K562 (cell line): ENCODE measurements at regions of chr1 and their contacts with region 1.

Region 1: GRCh38 chr1:207017615-207018559 is 14.7 kb downstream of the C1orf116 start:
- DNase-seq: peak; percentile 78 to 89 (median 84)
- ATAC-seq: peak; percentile 31
- H3K4me3 ChIP-seq: no peak overlapping the region
- H3K27ac ChIP-seq: peak overlapping the region; percentile 9; the same call in 1 of the 3 replicates
- H3K4me1 ChIP-seq: peaks cover 58 to 80% of the 10 kb centered on the region in 2 experiments
- H3K27me3 ChIP-seq: no peaks in the 10 kb centered on the region
- CTCF ChIP-seq: no peak
- EP300 ChIP-seq: peak; percentile 96
- POLR2A ChIP-seq: no peak
- RAD21 ChIP-seq: 0 out of 4 replicates have a peak, but pooled peaks of 1 of the 2 experiments have one; percentile 13

Region 2: DNA sequence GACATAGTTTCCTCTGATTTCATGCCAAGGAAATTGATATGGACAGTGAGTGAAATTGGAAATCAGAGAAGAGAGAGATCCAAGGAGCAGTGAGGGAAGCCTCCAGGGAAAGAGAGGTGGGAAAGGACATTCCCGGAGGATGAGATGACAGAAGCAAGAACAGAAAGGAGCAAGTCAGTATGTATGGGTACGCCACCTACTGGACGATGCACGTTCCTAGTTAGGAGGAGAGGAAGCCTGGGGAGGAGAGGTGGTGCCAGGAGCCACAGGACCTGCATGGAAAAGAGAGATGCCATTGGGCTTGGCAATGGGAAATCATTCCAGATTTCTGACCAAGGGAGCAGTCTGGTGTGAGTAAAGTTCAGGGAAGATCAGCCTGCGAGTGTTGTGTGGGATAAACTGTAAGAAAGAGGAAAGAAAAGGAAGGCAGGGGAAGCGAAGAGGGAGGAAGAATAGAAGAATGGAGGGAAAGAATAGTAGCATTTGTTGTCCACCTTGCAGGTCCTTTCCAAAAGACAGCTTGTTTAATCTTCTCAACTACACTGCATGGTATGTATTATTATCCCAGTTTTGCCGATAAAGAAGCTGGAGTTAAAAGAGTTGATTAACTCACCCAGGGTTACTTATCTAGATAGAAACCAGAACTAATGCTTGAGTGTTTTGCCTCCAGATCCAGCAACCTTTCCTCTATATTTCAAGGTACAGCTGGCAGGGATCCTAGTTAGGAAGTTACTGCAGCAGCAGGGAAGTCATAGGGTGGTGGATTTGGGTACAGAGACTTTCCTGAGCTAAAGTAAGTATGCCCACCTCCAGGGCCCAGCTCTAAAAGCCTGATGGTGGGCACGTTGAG is 12.7 kb before region 1 on chr1:
- CTCF ChIA-PET with region 1: no interaction called
- POLR2A ChIA-PET with region 1: interaction called, 38 read pairs
- in situ Hi-C with region 1: no loop called
- intact Hi-C with region 1: no loop called
- DNase-seq: peak; percentile 70 to 88 (median 74)
- ATAC-seq: peak; percentile 91
- H3K4me3 ChIP-seq: no peak overlapping the region
- H3K27ac ChIP-seq: no peak overlapping the region; the same call in 2 of the 3 replicates
- H3K4me1 ChIP-seq: peaks cover 6 to 42% of the 10 kb centered on the region in 2 experiments; a peak in 4 of 5 replicates
- H3K27me3 ChIP-seq: no peaks in the 10 kb centered on the region
- CTCF ChIP-seq: peak; percentile 81 to 96 (median 82)
- EP300 ChIP-seq: no peak
- POLR2A ChIP-seq: no peak
- RAD21 ChIP-seq: peak; percentile 47 to 63

Region 3: GRCh38 chr1:207032528-207033017 is 14.7 kb after region 1 on chr1 and contains the start of gene C1orf116:
- CTCF ChIA-PET with region 1: no interaction called
- POLR2A ChIA-PET with region 1: interaction called, 52 read pairs
- in situ Hi-C with region 1: no loop called
- intact Hi-C with region 1: no loop called
- DNase-seq: peak; percentile 93 to 98 (median 97)
- ATAC-seq: peak; percentile 88
- H3K4me3 ChIP-seq: no peak within 1 kb of the TSS
- H3K27ac ChIP-seq: peak within 1 kb of the TSS; percentile 44
- H3K4me1 ChIP-seq: peaks cover 13 to 94% of the 10 kb centered on the region in 2 experiments
- H3K27me3 ChIP-seq: no peaks in the 10 kb centered on the region
- CTCF ChIP-seq: no peak
- EP300 ChIP-seq: no peak; the same call in 1 of the 2 replicates
- POLR2A ChIP-seq: no peak
- RAD21 ChIP-seq: no peak
- polyA plus RNA-seq, gene C1orf116: 0.62 to 0.69 TPM